GM13977 (cell line): ENCODE measurements at regions of chr15 and their contacts with region 1.

Region 1: DNA sequence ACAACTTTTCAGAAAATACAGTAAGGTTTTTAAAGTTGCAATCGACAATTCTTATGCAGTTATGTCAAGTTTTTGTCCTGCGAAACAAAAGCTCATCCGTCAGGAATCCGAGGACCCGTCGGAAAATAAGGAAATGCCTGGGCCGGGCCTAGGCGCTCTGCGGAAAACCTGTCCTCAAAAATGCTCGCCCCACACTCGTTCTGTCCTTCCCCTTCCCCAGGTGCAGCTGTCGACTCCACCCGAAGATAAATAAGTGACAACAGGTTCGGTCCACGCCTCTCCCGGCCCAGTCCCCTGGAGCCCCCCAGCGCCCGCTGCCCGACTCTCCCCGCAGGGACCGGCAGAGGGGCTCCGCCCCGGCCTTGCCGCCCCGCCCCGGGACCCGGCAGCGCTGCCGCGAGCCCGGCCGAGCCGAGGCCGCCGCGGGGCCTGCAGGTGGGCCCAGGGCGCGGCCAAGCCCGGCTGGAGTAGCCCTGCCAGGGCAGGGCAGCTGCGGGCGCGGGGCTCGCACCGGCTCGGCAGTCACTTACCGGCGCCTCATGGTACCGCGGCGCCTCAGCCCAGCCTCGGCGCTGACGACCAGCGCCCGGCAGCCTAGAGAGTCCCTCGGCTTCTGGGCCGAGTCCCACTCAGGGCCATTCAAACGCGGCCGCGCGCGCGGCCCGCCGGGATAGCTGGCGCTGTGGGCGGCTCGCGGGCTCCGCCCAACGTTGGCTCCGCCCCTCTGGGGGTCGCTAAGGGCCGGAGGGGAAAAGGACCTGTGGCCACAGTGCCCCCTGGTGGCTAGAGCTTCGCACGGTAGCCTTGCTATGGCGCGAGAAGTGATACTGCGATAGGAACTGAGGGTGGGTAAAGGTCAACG is at the start of gene KATNBL1:
- DNase-seq: peak; percentile 97
- CTCF ChIP-seq: peak; percentile 93

Region 2: DNA sequence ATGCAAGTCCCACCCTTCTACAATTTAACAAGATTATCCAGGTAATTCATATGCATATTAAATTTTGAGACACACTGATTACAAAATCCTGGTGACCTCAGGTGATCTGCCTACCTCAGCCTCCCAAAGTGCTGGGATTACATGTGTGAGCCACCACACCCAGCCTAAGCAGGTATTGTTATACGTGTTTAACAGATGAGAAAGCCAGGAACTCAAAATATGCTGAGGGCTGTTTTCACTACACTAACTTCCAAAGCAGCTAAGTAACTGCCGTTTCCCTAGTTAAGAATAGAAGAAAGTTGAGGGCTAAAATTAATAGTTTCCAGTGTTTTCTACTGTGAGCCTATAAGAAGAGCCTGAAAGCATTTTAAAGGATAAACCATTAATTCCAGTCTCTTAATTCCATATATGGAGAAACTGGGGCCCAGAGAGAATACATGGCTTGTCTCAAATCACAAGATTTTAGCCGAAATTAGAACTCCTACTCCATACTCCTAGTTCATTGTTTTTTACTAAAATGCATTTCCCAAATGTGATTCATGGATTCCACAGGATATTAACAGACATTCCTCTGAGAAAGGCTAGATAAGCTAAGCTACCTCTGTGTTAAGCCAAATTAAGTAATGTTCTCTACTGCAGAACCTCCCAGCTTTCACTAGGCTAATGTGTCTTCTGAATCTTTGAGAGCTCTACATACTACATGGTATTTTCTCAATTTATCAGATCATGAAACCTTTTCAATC is 153.6 kb before region 1 on chr15:
- in situ Hi-C with region 1: loop called (anchors 10 kb)
- DNase-seq: no peak
- CTCF ChIP-seq: no peak

Region 3: GRCh38 chr15:34101366-34102175 is 108.1 kb before region 1 on chr15 and contains the starts of genes EMC7 and PGBD4:
- in situ Hi-C with region 1: loop called (anchors 25 kb)
- DNase-seq: peak; percentile 88
- CTCF ChIP-seq: no peak